ENCODE measurements at regions of chr12 and their contacts with region 1.

Region 1: GRCh38 chr12:88299567-88300101 is 157.5 kb downstream of the TMTC3 start:
- DNase-seq: peak; percentile 75
- H3K4me3 Mint-ChIP-seq: no peak overlapping the region
- H3K27ac Mint-ChIP-seq: peak overlapping the region; percentile 72
- H3K4me1 Mint-ChIP-seq: peaks cover 27% of the 10 kb centered on the region
- H3K27me3 Mint-ChIP-seq: no peaks in the 10 kb centered on the region

Region 2: DNA sequence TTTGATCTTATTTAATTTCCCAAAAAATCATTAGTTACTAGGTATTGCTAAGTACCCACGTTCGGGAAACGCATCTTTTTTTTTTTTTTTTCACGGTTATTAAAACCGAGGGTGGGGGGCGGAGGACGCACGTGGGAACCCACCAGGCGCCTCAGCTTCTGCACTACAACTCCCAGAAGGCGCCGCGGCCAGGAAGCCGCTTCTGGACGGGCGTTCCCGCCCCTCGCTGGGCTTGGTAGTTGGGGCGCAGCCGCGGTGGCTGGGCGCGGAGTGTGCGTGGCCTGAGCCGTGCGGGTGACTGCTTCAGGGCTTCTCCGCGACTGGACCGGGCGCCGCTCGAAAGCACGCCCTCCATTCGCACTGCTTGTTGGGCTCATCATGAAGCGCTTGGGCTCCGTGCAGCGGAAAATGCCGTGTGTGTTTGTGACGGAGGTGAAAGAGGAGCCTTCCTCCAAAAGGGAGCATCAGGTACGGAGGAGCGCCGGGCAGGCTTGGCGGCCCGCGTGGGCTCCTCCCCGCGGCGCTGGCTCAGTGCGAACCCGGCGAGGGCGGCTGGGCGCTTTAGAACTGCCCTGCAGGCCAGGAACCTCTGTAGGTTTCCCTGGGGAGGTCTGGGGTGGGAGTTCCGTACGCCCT is 264.2 kb before region 1 on chr12:
- CTCF ChIA-PET with region 1: no interaction called
- POLR2A ChIA-PET with region 1: no interaction called
- intact Hi-C with region 1: loop called (anchors 1 kb)
- DNase-seq: peak; percentile 92
- H3K4me3 Mint-ChIP-seq: peak overlapping the region; percentile 98
- H3K27ac Mint-ChIP-seq: peak overlapping the region; percentile 94
- H3K4me1 Mint-ChIP-seq: peaks cover 47% of the 10 kb centered on the region
- H3K27me3 Mint-ChIP-seq: no peaks in the 10 kb centered on the region

Region 3: GRCh38 chr12:88235183-88235833 is 64.3 kb before region 1 on chr12:
- CTCF ChIA-PET with region 1: interaction called, 3 read pairs
- POLR2A ChIA-PET with region 1: interaction called, 9 read pairs
- intact Hi-C with region 1: loop called (anchors 1 kb)
- DNase-seq: peak; percentile 52
- H3K4me3 Mint-ChIP-seq: no peak overlapping the region
- H3K27ac Mint-ChIP-seq: peak overlapping the region; percentile 72
- H3K4me1 Mint-ChIP-seq: peaks cover 27% of the 10 kb centered on the region
- H3K27me3 Mint-ChIP-seq: peaks cover 3% of the 10 kb centered on the region

Region 4: DNA sequence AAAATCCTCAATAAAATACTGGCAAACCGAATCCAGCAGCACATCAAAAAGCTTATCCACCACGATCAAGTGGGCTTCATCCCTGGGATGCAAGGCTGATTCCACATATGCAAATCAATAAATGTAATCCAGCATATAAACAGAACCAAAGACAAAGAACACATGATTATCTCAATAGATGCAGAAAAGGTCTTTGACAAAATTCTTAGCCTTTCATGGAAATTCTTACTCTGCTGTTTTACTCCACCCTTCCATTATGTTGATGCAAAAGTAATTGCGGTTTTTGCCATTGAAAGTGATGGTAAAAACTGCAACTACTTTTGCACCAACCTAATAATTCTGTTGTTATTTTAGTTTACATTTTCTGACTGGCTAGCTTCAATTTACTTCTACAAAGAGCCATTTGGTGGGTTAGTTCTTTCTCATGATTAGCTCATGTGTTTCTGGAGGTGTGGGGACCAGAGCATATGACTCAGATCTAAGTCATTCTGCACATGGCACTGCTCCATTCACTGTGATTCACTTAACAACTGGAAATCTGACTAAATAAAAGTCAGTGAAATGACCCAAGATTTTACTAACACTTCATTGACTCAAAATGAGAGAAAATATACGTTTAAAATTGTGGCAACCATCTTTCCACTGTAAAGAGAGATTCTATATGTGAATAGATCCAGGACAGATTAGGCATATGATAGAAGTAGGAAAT is 57.6 kb before region 1 on chr12:
- CTCF ChIA-PET with region 1: no interaction called
- POLR2A ChIA-PET with region 1: interaction called, 11 read pairs
- intact Hi-C with region 1: loop called (anchors 1 kb)
- DNase-seq: peak; percentile 54
- H3K4me3 Mint-ChIP-seq: no peak overlapping the region
- H3K27ac Mint-ChIP-seq: peak overlapping the region; percentile 83
- H3K4me1 Mint-ChIP-seq: peaks cover 35% of the 10 kb centered on the region
- H3K27me3 Mint-ChIP-seq: peaks cover 13% of the 10 kb centered on the region

Region 5: DNA sequence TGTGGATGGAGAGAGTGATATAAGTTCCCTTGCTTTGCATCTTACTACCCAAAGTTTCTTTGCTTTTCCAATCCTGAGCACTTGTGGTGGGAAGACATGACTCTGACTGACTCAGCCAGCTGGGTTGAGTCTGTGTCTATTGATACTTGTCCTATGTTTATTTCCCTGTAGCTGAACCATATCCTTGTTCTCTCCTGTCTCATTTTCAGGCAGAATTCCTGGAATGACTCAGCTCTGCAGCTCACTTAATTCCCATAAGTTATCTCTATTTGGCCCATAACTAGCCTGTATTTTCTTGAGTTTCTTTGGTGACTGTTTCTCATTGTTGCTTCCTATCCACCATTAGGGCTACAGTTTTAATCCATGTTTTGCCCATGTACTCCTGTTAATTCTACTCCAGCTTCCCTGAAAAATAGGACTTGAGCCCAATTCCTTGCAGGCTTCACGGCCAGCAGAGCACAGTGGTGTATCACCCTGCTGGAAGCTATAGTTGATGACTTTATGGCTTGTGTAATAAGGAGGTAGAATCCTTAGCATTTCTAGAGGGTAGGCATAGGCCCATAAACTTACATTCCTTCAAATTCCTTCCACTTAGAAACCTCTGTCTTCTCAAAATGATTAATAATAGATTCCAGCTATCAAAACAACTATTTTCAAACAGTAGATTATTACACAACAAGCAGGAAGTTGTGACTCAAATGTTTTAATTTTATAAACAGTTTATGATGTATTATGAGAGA is 25.6 kb after region 1 on chr12:
- CTCF ChIA-PET with region 1: no interaction called
- POLR2A ChIA-PET with region 1: no interaction called
- intact Hi-C with region 1: no loop called
- DNase-seq: no peak
- H3K4me3 Mint-ChIP-seq: no peak overlapping the region
- H3K27ac Mint-ChIP-seq: no peak overlapping the region
- H3K4me1 Mint-ChIP-seq: no peaks in the 10 kb centered on the region
- H3K27me3 Mint-ChIP-seq: no peaks in the 10 kb centered on the region

Region 6: GRCh38 chr12:88393017-88393767 is 93.6 kb after region 1 on chr12:
- CTCF ChIA-PET with region 1: no interaction called
- POLR2A ChIA-PET with region 1: no interaction called
- intact Hi-C with region 1: loop called (anchors 1 kb)
- DNase-seq: no peak
- H3K4me3 Mint-ChIP-seq: no peak overlapping the region
- H3K27ac Mint-ChIP-seq: no peak overlapping the region
- H3K4me1 Mint-ChIP-seq: peaks cover 5% of the 10 kb centered on the region
- H3K27me3 Mint-ChIP-seq: peaks cover 2% of the 10 kb centered on the region

Region 7: GRCh38 chr12:90280564-90281058 is 1981.0 kb after region 1 on chr12:
- CTCF ChIA-PET with region 1: no interaction called
- POLR2A ChIA-PET with region 1: no interaction called
- intact Hi-C with region 1: loop called (anchors 5 kb)
- DNase-seq: peak; percentile 37
- H3K4me3 Mint-ChIP-seq: no peak overlapping the region
- H3K27ac Mint-ChIP-seq: peak overlapping the region; percentile 13
- H3K4me1 Mint-ChIP-seq: peaks cover 16% of the 10 kb centered on the region
- H3K27me3 Mint-ChIP-seq: peaks cover 5% of the 10 kb centered on the region